ENCODE measurements at regions of chr4 and their contacts with region 1.

Region 1: GRCh38 chr4:26410385-26411293 is 79.6 kb downstream of the CCKAR start:
- DNase-seq: no peak
- ATAC-seq: peak; percentile 31 to 51

Region 2: DNA sequence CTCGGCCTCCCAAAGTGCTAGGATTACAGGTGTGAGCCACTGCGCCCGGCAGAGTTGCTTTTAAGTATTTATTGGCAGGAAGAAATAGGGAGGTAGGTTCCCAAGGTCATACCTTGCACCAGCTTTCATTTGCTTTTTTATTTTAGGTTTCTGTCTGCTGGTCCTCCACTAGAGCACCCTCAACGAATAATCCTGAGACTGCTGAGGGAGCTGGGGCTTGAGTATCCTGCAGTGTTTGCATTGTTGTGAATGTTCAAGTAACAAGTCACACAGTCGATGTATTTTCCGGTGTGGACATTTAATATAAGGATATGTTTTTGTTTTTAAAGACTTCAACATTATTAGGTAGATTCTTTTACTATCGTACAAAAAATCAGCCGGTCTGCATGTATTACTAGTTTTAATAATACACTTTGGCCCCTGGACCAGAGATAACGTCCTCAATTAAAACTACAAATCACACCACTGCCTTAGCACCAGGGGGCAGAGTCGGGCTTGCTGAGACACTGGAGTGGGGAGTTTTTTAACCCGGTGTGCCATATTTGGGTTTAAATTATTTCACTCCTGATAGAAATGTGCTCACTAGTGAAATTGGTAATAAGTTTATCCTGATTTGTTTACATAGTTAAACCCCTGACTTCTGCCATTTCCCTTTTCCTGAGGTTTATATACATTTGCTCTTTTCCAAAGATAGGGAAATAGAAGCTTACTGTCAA is 485.0 kb before region 1 on chr4:
- intact Hi-C with region 1: loop called in 1 of 2 experiments (anchors 5 kb)
- DNase-seq: peak; percentile 47
- ATAC-seq: peak in 1 of 2 donors; percentile 47

Region 3: DNA sequence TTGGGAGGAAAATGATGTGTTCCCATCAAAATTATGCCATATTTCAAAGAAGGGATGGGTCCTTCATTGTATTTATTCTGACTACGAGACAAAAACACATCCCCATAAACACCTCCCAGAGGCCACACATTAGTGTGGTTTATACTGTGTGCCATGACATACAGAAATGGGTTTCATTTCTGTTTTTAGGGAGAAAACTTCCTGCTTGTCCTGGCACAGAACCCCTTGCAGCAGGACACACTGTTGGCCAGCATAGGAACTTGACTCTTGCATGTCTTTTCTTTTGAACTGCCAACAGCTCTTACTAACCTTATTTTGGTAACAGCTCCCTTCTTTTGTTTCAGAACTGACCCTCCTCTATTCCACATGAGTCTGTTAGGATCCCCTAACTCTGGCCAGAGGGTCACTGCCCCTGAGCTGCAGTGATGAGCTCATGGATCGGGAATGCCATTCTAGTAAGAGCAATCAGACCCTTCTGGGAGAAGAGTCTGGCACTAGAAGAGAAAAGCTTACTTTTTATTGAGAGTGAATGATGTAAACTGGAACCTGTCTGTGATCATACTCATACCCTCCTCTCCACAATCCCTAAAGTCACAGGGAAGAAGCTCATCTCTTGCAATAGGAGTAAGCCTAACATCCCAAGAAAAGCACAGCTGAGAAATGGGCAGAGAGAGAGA is 410.2 kb before region 1 on chr4:
- intact Hi-C with region 1: no loop called
- DNase-seq: no peak
- ATAC-seq: peak; percentile 41 to 67

Region 4: GRCh38 chr4:26028793-26029567 is 381.7 kb before region 1 on chr4:
- intact Hi-C with region 1: loop called in 1 of 2 experiments (anchors 2 kb)
- DNase-seq: peak; percentile 78
- ATAC-seq: peak; percentile 93 to 94

Region 5: GRCh38 chr4:26081795-26082498 is 328.7 kb before region 1 on chr4:
- intact Hi-C with region 1: loop called in 1 of 2 experiments (anchors 5 kb)
- DNase-seq: no peak
- ATAC-seq: peak; percentile 61 to 73

Region 6: DNA sequence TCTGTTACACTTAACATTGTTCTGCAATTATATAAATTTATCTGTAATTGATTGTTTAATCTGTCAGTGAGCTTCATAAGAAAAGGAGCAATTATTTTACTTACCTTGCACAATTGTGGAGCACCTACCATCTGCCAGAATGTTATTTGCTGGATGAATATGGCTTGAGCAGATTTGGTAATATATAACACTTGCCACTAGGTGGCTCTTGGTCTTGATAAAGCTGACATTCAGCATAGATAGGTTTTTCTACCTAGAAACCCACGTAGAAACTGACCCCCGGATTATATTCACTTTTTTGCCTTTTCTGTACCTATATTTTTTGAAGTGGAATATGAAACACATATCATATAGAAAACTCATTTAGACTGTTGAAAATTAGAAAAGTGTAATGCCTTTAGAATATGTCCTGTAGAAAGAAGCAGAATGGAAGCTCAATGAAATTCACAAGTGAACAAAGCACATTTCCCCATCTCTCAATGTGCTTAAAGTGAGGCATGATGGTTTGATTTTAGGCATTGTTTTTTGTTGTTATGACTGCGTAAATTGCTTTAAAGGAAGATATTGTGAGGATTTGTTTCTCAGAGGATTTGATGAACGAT is 80.4 kb before region 1 on chr4:
- intact Hi-C with region 1: loop called (anchors 2 to 10 kb)
- DNase-seq: no peak
- ATAC-seq: peak; percentile 68 to 78